CD8-positive, alpha-beta T cell (primary cell): ENCODE measurements at regions of chr22 and their contacts with region 1.

Region 1: GRCh38 chr22:41998361-41999275 is at the start of gene WBP2NL:
- DNase-seq: peak; percentile 77 to 95 (median 88)
- ATAC-seq: peak; percentile 95
- H3K4me3 ChIP-seq: peak within 1 kb of the TSS; percentile 70 to 76
- H3K4me3 Mint-ChIP-seq: peak within 1 kb of the TSS; percentile 97
- H3K27ac ChIP-seq: peak within 1 kb of the TSS; percentile 43 to 60
- H3K27ac Mint-ChIP-seq: peak within 1 kb of the TSS; percentile 97
- H3K4me1 ChIP-seq: peaks cover 13% of the 10 kb centered on the region
- H3K4me1 Mint-ChIP-seq: peaks cover 16% of the 10 kb centered on the region
- H3K27me3 ChIP-seq: no peaks in the 10 kb centered on the region
- H3K27me3 Mint-ChIP-seq: peaks cover 4% of the 10 kb centered on the region
- CTCF ChIP-seq: no peak
- total RNA-seq, gene WBP2NL: 0.28 to 0.60 TPM

Region 2: DNA sequence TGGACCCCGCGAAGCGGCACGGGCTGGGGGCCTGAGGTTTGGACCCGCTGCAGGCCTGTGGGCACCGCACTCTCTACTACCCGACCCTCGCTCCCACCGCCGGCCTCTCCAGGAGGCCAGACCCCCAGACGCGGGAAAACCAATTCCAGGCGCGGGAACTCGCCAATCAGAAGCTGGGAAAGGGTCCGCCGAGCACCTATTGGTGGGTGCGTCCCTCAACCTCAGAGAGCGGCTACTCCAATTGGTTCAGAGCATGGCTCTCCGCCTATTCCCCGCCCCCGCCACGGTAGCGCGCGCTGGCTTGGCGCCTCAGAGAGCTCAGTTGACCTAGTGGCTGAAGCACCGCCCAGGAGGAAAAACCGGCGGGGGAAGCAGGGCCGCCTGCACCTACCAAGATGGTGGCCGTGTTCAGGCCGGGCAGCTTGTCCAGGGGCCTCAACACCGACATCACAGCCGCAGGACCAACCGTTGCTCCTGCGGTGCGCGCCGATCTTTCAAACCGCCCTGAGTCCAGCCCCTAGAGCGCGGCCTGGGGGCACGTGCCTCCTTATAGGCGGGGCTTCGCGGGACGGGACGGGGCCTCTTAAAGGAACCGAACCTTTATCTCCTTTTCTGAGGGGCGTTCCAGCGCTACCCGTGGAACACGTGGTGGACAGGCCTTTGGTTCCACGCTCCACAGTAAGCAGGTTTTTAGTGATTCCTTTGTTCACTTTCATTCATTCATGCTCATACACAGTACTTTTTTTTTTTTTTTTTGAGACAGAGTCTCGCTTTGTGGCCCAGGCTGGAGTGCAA is 51.8 kb before region 1 on chr22 and contains the start of gene CENPM:
- CTCF ChIA-PET with region 1: no interaction called
- POLR2A ChIA-PET with region 1: no interaction called
- intact Hi-C with region 1: loop called in 1 of 2 experiments (anchors 1 kb)
- DNase-seq: peak; percentile 65 to 89 (median 84)
- ATAC-seq: peak; percentile 94
- H3K4me3 ChIP-seq: peak within 1 kb of the TSS; percentile 75 to 87
- H3K4me3 Mint-ChIP-seq: peak within 1 kb of the TSS; percentile 91
- H3K27ac ChIP-seq: peak within 1 kb of the TSS in 1 of 2 experiments; percentile 4
- H3K27ac Mint-ChIP-seq: no peak within 1 kb of the TSS
- H3K4me1 ChIP-seq: peaks cover 19% of the 10 kb centered on the region
- H3K4me1 Mint-ChIP-seq: peaks cover 13% of the 10 kb centered on the region
- H3K27me3 ChIP-seq: peaks cover 0 to 2% of the 10 kb centered on the region in 2 experiments
- H3K27me3 Mint-ChIP-seq: no peaks in the 10 kb centered on the region
- CTCF ChIP-seq: no peak
- total RNA-seq, gene CENPM: 9.4 to 10.9 TPM

Region 3: GRCh38 chr22:42079319-42080251 is 81.0 kb after region 1 on chr22 and contains the start of gene SMDT1:
- CTCF ChIA-PET with region 1: no interaction called
- POLR2A ChIA-PET with region 1: interaction called, 4 read pairs
- intact Hi-C with region 1: loop called (anchors 2 kb)
- DNase-seq: peak; percentile 95 to 99 (median 98)
- ATAC-seq: peak; percentile 92
- H3K4me3 ChIP-seq: peak within 1 kb of the TSS; percentile 79 to 80
- H3K4me3 Mint-ChIP-seq: peak within 1 kb of the TSS; percentile 93
- H3K27ac ChIP-seq: peak within 1 kb of the TSS; percentile 89 to 97
- H3K27ac Mint-ChIP-seq: peak within 1 kb of the TSS; percentile 98
- H3K4me1 ChIP-seq: peaks cover 21% of the 10 kb centered on the region
- H3K4me1 Mint-ChIP-seq: peaks cover 36% of the 10 kb centered on the region
- H3K27me3 ChIP-seq: no peaks in the 10 kb centered on the region
- H3K27me3 Mint-ChIP-seq: no peaks in the 10 kb centered on the region
- CTCF ChIP-seq: no peak
- total RNA-seq, gene SMDT1: 30.4 to 34.5 TPM